ENCODE measurements at regions of chr22 and their contacts with region 1.

Region 1: DNA sequence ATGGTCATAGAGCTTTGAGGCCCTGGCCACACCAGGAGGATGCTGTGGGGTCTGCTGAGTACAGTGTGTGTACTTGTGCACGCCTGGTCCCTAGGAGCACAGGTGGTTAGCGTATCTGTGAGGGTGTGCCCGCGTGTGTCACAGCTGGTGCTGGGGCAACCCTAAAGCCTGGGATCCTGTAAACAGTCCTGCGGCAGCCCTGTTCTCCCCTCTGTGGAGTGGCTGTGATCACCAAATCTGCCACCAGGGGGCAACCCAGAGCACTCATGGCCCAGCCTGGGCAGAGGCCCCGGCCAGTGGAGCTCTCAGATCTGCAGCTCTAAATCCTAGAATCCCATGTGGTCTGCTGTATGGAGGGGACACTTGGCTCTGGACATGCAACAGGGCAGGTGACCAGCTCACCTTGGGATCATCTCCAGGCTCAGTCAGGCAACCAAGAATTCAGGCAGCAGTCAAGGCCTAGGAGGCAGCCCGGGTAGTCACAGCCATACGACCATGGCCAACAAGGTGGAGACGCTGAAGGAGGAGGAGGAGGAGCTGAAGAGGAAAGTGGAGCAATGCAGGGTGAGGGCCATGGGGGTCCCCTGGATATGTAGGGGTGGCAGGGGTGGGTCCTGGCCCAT is 3.9 kb downstream of the SH3BP1 start:
- DNase-seq: peak; percentile 86 to 90
- ATAC-seq: peak; percentile 76 to 93 (median 86)
- H3K4me3 ChIP-seq: no peak overlapping the region
- H3K27ac ChIP-seq: no peak overlapping the region
- H3K4me1 ChIP-seq: peaks cover 0 to 44% (median 19%) of the 10 kb centered on the region in 9 donors
- H3K27me3 ChIP-seq: peaks cover 0 to 12% (median 0%) of the 10 kb centered on the region in 7 donors
- CTCF ChIP-seq: peak; percentile 91 to 97 (median 95)

Region 2: GRCh38 chr22:37139762-37140161 is 503.6 kb before region 1 on chr22:
- intact Hi-C with region 1: no loop called
- DNase-seq: no peak
- ATAC-seq: no peak
- H3K4me3 ChIP-seq: no peak overlapping the region
- H3K27ac ChIP-seq: no peak overlapping the region
- H3K4me1 ChIP-seq: peaks cover 0 to under 1% (median 0%) of the 10 kb centered on the region in 9 donors
- H3K27me3 ChIP-seq: peaks cover 0 to 38% (median 11%) of the 10 kb centered on the region in 7 donors
- CTCF ChIP-seq: no peak

Region 3: DNA sequence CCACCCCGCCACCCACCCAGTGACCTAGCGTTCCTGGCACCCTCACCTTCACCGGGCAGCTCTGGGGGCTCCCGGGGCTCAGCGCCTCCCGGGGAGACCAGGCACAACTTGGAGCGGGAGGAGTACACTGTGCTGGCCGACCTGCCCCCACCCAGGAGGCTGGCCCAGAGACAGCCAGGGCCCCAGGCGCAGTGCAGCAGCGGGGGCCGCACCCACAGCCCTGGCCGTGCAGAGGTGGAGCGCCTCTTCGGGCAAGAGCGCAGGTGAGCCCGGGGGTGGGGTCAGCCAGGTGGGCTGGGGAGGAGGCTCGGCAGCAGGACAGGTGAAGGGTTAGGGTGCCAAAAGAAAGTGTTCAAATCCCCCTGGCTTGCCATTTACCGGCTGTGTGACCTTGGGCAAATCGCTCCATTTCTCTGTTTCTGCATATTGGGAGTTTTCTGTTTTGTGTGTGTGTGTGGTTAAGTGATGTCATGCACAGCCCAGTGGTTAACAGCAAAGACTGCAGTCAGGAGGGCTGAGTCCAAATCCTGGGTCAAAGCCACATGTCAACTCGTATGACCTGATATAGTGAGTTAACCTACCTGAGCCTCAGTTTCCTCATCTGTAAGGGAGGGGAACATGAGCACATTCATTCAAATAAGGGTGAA is 83.0 kb after region 1 on chr22:
- intact Hi-C with region 1: loop called in 1 of 10 experiments (anchors 10 kb)
- DNase-seq: no peak
- ATAC-seq: peak in 2 of 8 donors; percentile 18 to 48
- H3K4me3 ChIP-seq: no peak overlapping the region
- H3K27ac ChIP-seq: no peak overlapping the region
- H3K4me1 ChIP-seq: peaks cover 0 to 33% (median 13%) of the 10 kb centered on the region in 9 donors
- H3K27me3 ChIP-seq: no peaks in the 10 kb centered on the region
- CTCF ChIP-seq: peak in 4 of 9 donors; percentile 13 to 33 (median 20)

Region 4: GRCh38 chr22:37792494-37792893 is 149.2 kb after region 1 on chr22:
- intact Hi-C with region 1: loop called in 8 of 10 experiments (anchors 2 to 10 kb)
- DNase-seq: no peak
- ATAC-seq: no peak
- H3K4me3 ChIP-seq: no peak overlapping the region
- H3K27ac ChIP-seq: no peak overlapping the region
- H3K4me1 ChIP-seq: peaks cover 0 to 7% (median 0%) of the 10 kb centered on the region in 9 donors
- H3K27me3 ChIP-seq: no peaks in the 10 kb centered on the region
- CTCF ChIP-seq: no peak

Measured in heart right ventricle (tissue), 16 donors.